ENCODE measurements at regions of chr6 and their contacts with region 1.

Region 1: GRCh38 chr6:136822376-136823127 is at the start of gene PEX7:
- DNase-seq: peak; percentile 58
- H3K4me3 ChIP-seq: peak within 1 kb of the TSS; percentile 82
- CTCF ChIP-seq: peak; percentile 92

Region 2: GRCh38 chr6:136840276-136841001 is 17.9 kb after region 1 on chr6:
- CTCF ChIA-PET with region 1: interaction called, 27 read pairs
- POLR2A ChIA-PET with region 1: no interaction called
- DNase-seq: no peak
- H3K4me3 ChIP-seq: no peak overlapping the region
- CTCF ChIP-seq: no peak

Region 3: GRCh38 chr6:136975089-136975715 is 152.7 kb after region 1 on chr6:
- CTCF ChIA-PET with region 1: no interaction called
- POLR2A ChIA-PET with region 1: no interaction called
- DNase-seq: no peak
- H3K4me3 ChIP-seq: no peak overlapping the region
- CTCF ChIP-seq: no peak

Region 4: GRCh38 chr6:137171824-137172705 is 349.5 kb after region 1 on chr6:
- CTCF ChIA-PET with region 1: no interaction called
- POLR2A ChIA-PET with region 1: no interaction called
- DNase-seq: no peak
- H3K4me3 ChIP-seq: no peak overlapping the region
- CTCF ChIP-seq: no peak

Measured in AG04449 (cell line).